Calu3 (cell line): ENCODE measurements at regions of chr12 and their contacts with region 1.

Region 1: DNA sequence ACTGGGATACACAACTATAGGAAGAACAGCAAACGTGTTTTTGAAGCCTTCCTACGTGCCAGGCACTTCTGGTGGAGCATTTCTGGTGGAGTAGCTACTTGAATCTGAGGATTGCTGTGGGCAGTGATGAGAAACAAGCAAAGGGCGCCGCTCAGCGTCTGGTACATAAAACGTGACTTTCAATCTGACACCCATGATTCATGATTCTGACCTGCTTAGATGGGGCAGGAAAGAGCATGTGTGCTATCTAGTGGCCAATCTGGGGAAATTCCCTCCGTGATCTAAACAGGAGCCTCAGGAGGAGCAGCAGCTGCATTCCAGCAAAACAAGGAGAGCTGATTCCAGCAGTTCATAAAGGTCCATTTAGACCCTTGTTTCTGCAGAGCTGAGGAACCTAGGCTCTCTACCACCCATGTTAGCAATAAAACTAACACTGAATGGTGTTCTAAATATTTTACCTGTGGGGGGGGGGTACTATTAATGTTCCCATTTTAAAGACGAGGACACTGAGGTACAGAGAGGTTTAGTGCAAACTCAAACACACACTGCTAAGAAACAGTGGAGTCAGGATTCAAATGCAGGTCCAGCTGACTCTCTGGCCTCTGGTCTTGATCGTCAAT is 37.8 kb downstream of the PAH start:
- DNase-seq: peak; percentile 65
- H3K4me3 Mint-ChIP-seq: no peak overlapping the region
- H3K27ac Mint-ChIP-seq: no peak overlapping the region
- H3K4me1 Mint-ChIP-seq: peaks cover 12% of the 10 kb centered on the region
- H3K27me3 Mint-ChIP-seq: no peaks in the 10 kb centered on the region
- CTCF ChIP-seq: peak; percentile 60

Region 2: DNA sequence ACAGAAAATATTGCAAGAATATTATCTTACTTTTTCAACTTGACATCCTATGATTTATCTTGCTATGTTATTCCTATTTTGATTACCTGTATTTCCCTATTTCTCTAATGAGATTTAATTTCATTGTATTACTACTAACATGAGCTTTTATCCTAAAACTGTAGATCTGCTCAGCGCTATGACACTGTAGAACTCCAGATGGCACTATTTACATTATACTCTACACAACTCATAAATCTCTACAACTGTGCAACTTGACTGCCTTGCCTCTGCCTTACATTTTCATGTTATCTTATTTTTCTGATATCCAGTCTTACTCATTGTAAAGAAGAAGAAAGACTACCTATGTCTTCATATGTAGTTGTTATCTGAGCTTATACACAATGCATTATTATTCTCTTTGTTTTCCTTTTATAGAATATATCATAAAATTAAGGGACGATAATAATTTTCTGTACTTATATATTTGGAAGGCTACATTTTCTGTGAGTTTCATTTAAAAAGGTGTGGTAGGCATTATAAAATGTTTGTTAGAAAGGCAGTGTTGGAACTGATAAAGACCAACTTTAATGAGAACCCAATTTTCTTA is 783.5 kb before region 1 on chr12:
- CTCF ChIA-PET with region 1: no interaction called
- intact Hi-C with region 1: loop called (anchors 10 kb)
- DNase-seq: peak; percentile 12
- H3K4me3 Mint-ChIP-seq: no peak overlapping the region
- H3K27ac Mint-ChIP-seq: no peak overlapping the region
- H3K4me1 Mint-ChIP-seq: no peaks in the 10 kb centered on the region
- H3K27me3 Mint-ChIP-seq: no peaks in the 10 kb centered on the region
- CTCF ChIP-seq: peak; percentile 20

Region 3: GRCh38 chr12:102169922-102170621 is 709.2 kb before region 1 on chr12:
- CTCF ChIA-PET with region 1: no interaction called
- intact Hi-C with region 1: loop called (anchors 2 kb)
- DNase-seq: peak; percentile 20
- H3K4me3 Mint-ChIP-seq: no peak overlapping the region
- H3K27ac Mint-ChIP-seq: no peak overlapping the region
- H3K4me1 Mint-ChIP-seq: peaks cover 7% of the 10 kb centered on the region
- H3K27me3 Mint-ChIP-seq: no peaks in the 10 kb centered on the region
- CTCF ChIP-seq: peak; percentile 46

Region 4: DNA sequence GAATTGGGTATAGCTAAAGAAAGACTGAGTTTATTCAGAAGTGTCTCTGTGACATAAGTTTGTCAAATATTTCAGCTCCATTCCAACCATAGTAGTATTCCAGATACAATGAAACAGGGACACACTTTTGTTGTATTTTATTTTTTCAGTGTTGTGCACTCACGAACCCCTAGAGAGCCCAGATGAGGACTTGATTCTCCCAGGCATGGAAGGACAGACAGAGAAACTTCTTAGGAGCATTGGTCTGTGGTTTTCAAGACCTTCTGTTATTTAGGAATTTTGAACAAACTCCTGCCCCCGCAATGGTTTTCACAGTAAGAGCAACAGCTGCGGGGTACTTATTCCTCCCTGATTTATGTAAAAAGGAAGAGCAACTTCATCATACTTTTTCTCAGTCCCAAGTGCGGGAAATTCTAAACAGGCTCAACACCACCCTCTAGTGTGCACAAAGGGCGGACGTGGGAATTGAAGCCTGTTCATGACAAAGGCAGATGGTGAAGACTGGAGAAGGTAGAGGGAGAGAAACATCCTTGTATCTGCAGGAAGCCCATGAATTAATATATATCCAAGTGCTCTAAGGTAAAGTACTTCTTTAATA is 109.8 kb before region 1 on chr12:
- CTCF ChIA-PET with region 1: no interaction called
- intact Hi-C with region 1: loop called (anchors 5 kb)
- DNase-seq: peak; percentile 69
- H3K4me3 Mint-ChIP-seq: no peak overlapping the region
- H3K27ac Mint-ChIP-seq: no peak overlapping the region
- H3K4me1 Mint-ChIP-seq: no peaks in the 10 kb centered on the region
- H3K27me3 Mint-ChIP-seq: peaks cover 14% of the 10 kb centered on the region
- CTCF ChIP-seq: peak; percentile 63

Region 5: GRCh38 chr12:102816816-102817434 is 62.3 kb before region 1 on chr12:
- CTCF ChIA-PET with region 1: interaction called, 7 read pairs
- intact Hi-C with region 1: loop called (anchors 2 kb)
- DNase-seq: peak; percentile 17
- H3K4me3 Mint-ChIP-seq: no peak overlapping the region
- H3K27ac Mint-ChIP-seq: no peak overlapping the region
- H3K4me1 Mint-ChIP-seq: peaks cover 11% of the 10 kb centered on the region
- H3K27me3 Mint-ChIP-seq: peaks cover 16% of the 10 kb centered on the region
- CTCF ChIP-seq: peak; percentile 68

Region 6: GRCh38 chr12:102939670-102940222 is 60.5 kb after region 1 on chr12:
- CTCF ChIA-PET with region 1: interaction called, 45 read pairs
- intact Hi-C with region 1: loop called (anchors 1 kb)
- DNase-seq: no peak
- H3K4me3 Mint-ChIP-seq: no peak overlapping the region
- H3K27ac Mint-ChIP-seq: no peak overlapping the region
- H3K4me1 Mint-ChIP-seq: no peaks in the 10 kb centered on the region
- H3K27me3 Mint-ChIP-seq: peaks cover 12% of the 10 kb centered on the region
- CTCF ChIP-seq: no peak